ENCODE measurements at regions of chr22 and their contacts with region 1.

Region 1: DNA sequence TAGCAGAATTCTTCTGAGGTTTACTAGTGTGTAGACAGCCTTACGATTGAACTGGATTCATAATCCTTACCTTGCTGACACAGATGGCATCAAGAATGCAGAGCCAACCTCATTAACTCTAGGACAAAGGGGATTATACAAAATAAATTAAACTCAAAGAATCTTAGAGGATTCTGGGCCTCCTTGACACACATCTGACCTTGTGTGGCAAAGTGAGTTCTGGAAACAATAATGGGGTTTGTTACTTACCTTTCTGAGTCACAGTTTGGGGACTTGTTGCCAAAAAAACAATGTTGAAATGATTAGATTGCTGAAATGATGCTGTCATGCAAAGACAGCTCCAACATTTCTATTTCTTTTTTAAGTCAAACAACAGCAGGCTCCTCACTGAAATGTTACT is 179.1 kb upstream of the ISX start:
- DNase-seq: no peak
- ATAC-seq: no peak
- H3K4me3 ChIP-seq: no peak overlapping the region
- H3K4me3 Mint-ChIP-seq: no peak overlapping the region
- H3K27ac ChIP-seq: no peak overlapping the region
- H3K27ac Mint-ChIP-seq: no peak overlapping the region
- H3K4me1 ChIP-seq: no peaks in the 10 kb centered on the region
- H3K4me1 Mint-ChIP-seq: no peaks in the 10 kb centered on the region
- H3K27me3 ChIP-seq: no peaks in the 10 kb centered on the region
- H3K27me3 Mint-ChIP-seq: no peaks in the 10 kb centered on the region
- CTCF ChIP-seq: no peak

Region 2: GRCh38 chr22:34829485-34829884 is 57.3 kb before region 1 on chr22:
- CTCF ChIA-PET with region 1: no interaction called
- POLR2A ChIA-PET with region 1: no interaction called
- intact Hi-C with region 1: loop called in 1 of 2 experiments (anchors 2 kb)
- DNase-seq: no peak
- ATAC-seq: no peak
- H3K4me3 ChIP-seq: no peak overlapping the region
- H3K4me3 Mint-ChIP-seq: no peak overlapping the region
- H3K27ac ChIP-seq: no peak overlapping the region
- H3K27ac Mint-ChIP-seq: no peak overlapping the region
- H3K4me1 ChIP-seq: no peaks in the 10 kb centered on the region
- H3K4me1 Mint-ChIP-seq: no peaks in the 10 kb centered on the region
- H3K27me3 ChIP-seq: no peaks in the 10 kb centered on the region
- H3K27me3 Mint-ChIP-seq: peaks cover 6% of the 10 kb centered on the region
- CTCF ChIP-seq: no peak

Measured in CD8-positive, alpha-beta T cell (primary cell).